ENCODE measurements at regions of chr12 and their contacts with region 1.

Region 1: GRCh38 chr12:53675651-53676453 is at the start of gene ATP5MC2:
- DNase-seq: peak; percentile 100
- ATAC-seq: peak; percentile 97
- H3K4me3 ChIP-seq: peak within 1 kb of the TSS; percentile 97
- H3K27ac ChIP-seq: peak within 1 kb of the TSS; percentile 88
- H3K4me1 ChIP-seq: peaks cover 7% of the 10 kb centered on the region
- H3K27me3 ChIP-seq: peaks cover 2 to 3% of the 10 kb centered on the region in 2 experiments; a peak in 1 of 4 replicates
- CTCF ChIP-seq: peak; percentile 100; a peak in 5 of 6 replicates
- EP300 ChIP-seq: no peak
- POLR2A ChIP-seq: peak; percentile 96
- RAD21 ChIP-seq: peak; percentile 89
- polyA plus RNA-seq, gene ATP5MC2: 972 to 1,090 TPM

Region 2: GRCh38 chr12:53465679-53466078 is 210.2 kb before region 1 on chr12:
- CTCF ChIA-PET with region 1: no interaction called
- POLR2A ChIA-PET with region 1: no interaction called
- RAD21 ChIA-PET with region 1: no interaction called
- SMC1A ChIA-PET with region 1: no interaction called
- in situ Hi-C with region 1: no loop called
- intact Hi-C with region 1: no loop called
- DNase-seq: no peak
- ATAC-seq: no peak
- H3K4me3 ChIP-seq: no peak overlapping the region
- H3K27ac ChIP-seq: no peak overlapping the region
- H3K4me1 ChIP-seq: peaks cover 4% of the 10 kb centered on the region
- H3K27me3 ChIP-seq: no peaks in the 10 kb centered on the region
- CTCF ChIP-seq: no peak
- EP300 ChIP-seq: no peak
- POLR2A ChIP-seq: no peak
- RAD21 ChIP-seq: no peak

Region 3: DNA sequence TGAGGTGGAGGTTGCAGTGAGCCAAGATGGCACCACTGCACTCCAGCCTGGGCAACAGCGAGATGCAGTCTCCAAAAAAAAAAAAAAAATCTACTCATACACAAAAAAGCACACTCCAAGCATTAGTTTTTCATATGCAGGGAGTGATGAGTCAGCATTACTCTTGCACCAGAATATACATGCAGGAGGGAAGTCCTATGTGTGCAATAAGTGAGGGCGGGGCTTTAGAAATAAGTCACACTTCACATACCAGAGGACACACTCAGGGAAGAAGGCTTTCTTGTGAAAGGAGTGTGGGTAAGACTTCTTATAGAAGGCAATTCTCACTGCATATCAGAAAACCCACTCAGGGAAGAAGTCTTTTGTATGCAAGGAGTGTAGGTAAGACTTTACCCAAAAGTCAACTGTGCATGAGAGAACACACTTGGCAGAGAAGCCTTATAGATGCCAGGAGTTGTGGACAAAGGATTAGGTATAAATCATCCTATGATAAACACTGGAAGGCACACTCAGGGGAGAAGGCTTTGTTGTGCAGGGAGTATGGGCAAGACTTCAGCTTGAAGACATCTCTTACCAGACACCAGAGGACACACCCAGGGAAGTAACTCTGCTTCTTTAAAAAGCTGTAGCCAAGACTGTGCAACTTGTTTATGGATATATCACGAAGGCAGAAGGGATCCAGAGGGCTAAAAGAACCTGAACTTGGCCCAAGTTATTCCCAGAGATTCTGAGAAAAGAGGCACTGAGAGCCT is 100.2 kb before region 1 on chr12:
- CTCF ChIA-PET with region 1: interaction called, 13 read pairs
- POLR2A ChIA-PET with region 1: interaction called, 4 read pairs
- RAD21 ChIA-PET with region 1: interaction called, 4 read pairs
- SMC1A ChIA-PET with region 1: interaction called, 3 read pairs
- in situ Hi-C with region 1: no loop called
- intact Hi-C with region 1: no loop called
- DNase-seq: no peak
- ATAC-seq: no peak
- H3K4me3 ChIP-seq: no peak overlapping the region
- H3K27ac ChIP-seq: no peak overlapping the region
- H3K4me1 ChIP-seq: peaks cover 45% of the 10 kb centered on the region
- H3K27me3 ChIP-seq: no peaks in the 10 kb centered on the region
- CTCF ChIP-seq: no peak
- EP300 ChIP-seq: no peak
- POLR2A ChIP-seq: no peak
- RAD21 ChIP-seq: no peak

Region 4: GRCh38 chr12:53618275-53618674 is 57.6 kb before region 1 on chr12:
- CTCF ChIA-PET with region 1: interaction called, 27 read pairs
- POLR2A ChIA-PET with region 1: interaction called, 4 read pairs
- RAD21 ChIA-PET with region 1: interaction called, 39 read pairs
- SMC1A ChIA-PET with region 1: interaction called, 29 read pairs
- in situ Hi-C with region 1: no loop called
- intact Hi-C with region 1: no loop called
- DNase-seq: no peak
- ATAC-seq: peak; percentile 46
- H3K4me3 ChIP-seq: peak overlapping the region; percentile 51
- H3K27ac ChIP-seq: peak overlapping the region; percentile 76
- H3K4me1 ChIP-seq: peaks cover 16% of the 10 kb centered on the region
- H3K27me3 ChIP-seq: no peaks in the 10 kb centered on the region
- CTCF ChIP-seq: no peak
- EP300 ChIP-seq: no peak
- POLR2A ChIP-seq: no peak
- RAD21 ChIP-seq: no peak

Region 5: DNA sequence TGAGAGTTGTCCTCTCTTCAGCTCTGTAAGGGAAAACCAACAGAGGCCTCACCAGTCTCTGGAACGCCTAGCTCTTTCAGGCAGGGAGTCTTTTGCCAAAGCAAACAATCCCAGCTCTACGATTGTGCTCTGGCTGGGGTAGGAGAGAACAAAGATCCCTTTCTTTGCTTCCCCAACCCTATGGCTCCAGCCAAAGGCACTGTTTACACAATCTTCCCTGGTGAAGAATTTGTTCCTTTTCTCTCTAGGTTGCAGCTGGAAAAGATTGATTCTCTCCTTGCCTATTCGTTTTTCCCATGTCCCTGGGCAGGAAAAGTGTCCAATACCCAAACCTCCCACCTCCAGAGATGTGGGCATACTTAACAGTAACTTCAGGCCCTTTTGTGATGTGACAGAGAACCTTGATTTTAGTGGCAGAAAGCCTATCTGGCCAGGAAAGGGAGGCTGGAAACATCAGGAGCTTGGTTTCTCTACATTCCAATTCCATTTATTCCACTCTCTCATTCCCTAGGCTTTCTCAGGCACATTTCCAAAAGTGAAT is 16.8 kb before region 1 on chr12:
- CTCF ChIA-PET with region 1: interaction called, 6 read pairs
- POLR2A ChIA-PET with region 1: interaction called, 4 read pairs
- RAD21 ChIA-PET with region 1: interaction called, 5 read pairs
- SMC1A ChIA-PET with region 1: interaction called, 13 read pairs
- in situ Hi-C with region 1: no loop called
- intact Hi-C with region 1: no loop called
- DNase-seq: no peak
- ATAC-seq: no peak; the same call in 2 of the 3 replicates
- H3K4me3 ChIP-seq: no peak overlapping the region
- H3K27ac ChIP-seq: no peak overlapping the region
- H3K4me1 ChIP-seq: peaks cover 5% of the 10 kb centered on the region
- H3K27me3 ChIP-seq: no peaks in the 10 kb centered on the region
- CTCF ChIP-seq: no peak
- EP300 ChIP-seq: no peak
- POLR2A ChIP-seq: no peak
- RAD21 ChIP-seq: no peak

Region 6: DNA sequence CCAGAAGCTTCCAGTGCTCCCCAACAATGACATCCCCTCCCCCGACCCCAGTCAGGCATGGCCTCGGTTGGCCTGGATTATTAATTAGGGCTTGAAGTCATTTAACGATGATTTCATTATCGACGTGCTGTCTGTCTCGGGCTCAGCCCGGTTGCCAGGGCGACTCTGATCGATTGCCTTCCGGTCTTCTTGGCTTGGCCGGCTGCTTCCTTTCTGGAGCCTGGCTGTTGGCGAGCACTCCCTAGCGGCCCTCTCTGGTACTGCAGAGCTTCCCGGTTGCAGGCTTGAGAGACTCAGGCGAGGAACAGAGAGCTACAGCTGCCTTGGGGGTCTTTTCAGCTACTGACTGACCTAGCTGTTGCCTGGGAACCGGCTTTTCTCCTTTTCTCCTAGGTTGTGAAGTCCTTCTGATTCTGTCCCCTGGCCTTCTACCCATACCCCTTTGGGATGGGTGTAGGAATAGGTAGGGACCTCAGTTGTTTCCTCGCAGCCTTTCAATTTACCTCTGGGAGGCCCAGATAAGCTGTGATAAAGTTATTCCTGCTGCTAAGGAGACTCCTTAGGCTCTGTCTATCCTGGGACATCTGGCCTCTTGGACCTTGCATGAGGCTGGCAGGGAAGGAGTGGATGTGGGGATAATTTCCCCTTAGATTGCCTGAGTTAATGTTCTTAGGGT is 81.4 kb after region 1 on chr12:
- CTCF ChIA-PET with region 1: interaction called, 26 read pairs
- POLR2A ChIA-PET with region 1: interaction called, 3 read pairs
- RAD21 ChIA-PET with region 1: interaction called, 3 read pairs
- SMC1A ChIA-PET with region 1: interaction called, 9 read pairs
- in situ Hi-C with region 1: no loop called
- intact Hi-C with region 1: no loop called
- DNase-seq: no peak
- ATAC-seq: peak; percentile 74
- H3K4me3 ChIP-seq: peak overlapping the region; percentile 54
- H3K27ac ChIP-seq: peak overlapping the region; percentile 48
- H3K4me1 ChIP-seq: peaks cover 51% of the 10 kb centered on the region
- H3K27me3 ChIP-seq: peaks cover 0 to 5% of the 10 kb centered on the region in 2 experiments; a peak in 1 of 4 replicates
- CTCF ChIP-seq: peak; percentile 96 to 99 (median 98); a peak in 5 of 6 replicates
- EP300 ChIP-seq: no peak
- POLR2A ChIP-seq: no peak
- RAD21 ChIP-seq: peak; percentile 67

Region 7: GRCh38 chr12:53770281-53770680 is 94.4 kb after region 1 on chr12:
- CTCF ChIA-PET with region 1: no interaction called
- POLR2A ChIA-PET with region 1: no interaction called
- RAD21 ChIA-PET with region 1: no interaction called
- SMC1A ChIA-PET with region 1: no interaction called
- in situ Hi-C with region 1: no loop called
- intact Hi-C with region 1: no loop called
- DNase-seq: no peak
- ATAC-seq: no peak
- H3K4me3 ChIP-seq: no peak overlapping the region
- H3K27ac ChIP-seq: no peak overlapping the region
- H3K4me1 ChIP-seq: no peaks in the 10 kb centered on the region
- H3K27me3 ChIP-seq: no peaks in the 10 kb centered on the region
- CTCF ChIP-seq: no peak
- EP300 ChIP-seq: no peak
- POLR2A ChIP-seq: no peak
- RAD21 ChIP-seq: no peak

Region 8: DNA sequence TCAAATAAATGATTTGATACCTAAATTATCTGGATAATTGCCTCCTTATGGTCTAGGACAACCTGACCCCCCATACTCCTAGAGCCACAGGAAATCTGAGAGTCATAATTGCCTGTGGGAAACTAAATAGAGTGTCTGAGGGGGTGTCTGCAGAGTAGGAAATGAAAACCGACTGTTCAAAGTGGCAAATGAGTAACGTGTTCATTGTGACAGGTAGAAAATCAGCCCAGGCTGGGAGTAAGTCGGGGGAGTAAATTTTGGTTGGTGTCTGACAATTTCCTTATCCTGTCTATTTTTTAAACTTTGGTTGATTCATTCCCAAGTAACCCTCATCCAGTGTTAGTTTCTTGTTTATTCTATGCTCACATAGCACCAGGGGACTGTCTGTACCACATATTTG is 211.2 kb after region 1 on chr12:
- CTCF ChIA-PET with region 1: no interaction called
- POLR2A ChIA-PET with region 1: no interaction called
- RAD21 ChIA-PET with region 1: no interaction called
- SMC1A ChIA-PET with region 1: no interaction called
- in situ Hi-C with region 1: no loop called
- intact Hi-C with region 1: no loop called
- DNase-seq: no peak
- ATAC-seq: no peak
- H3K4me3 ChIP-seq: no peak overlapping the region
- H3K27ac ChIP-seq: no peak overlapping the region
- H3K4me1 ChIP-seq: no peaks in the 10 kb centered on the region
- H3K27me3 ChIP-seq: no peaks in the 10 kb centered on the region
- CTCF ChIP-seq: no peak
- EP300 ChIP-seq: no peak
- POLR2A ChIP-seq: no peak
- RAD21 ChIP-seq: no peak

Measured in GM12878 (cell line).